ENCODE measurements at regions of chr1 and their contacts with region 1.

Region 1: GRCh38 chr1:203267347-203267846 is 37.9 kb upstream of the BTG2 start:
- DNase-seq: peak; percentile 87
- ATAC-seq: peak; percentile 58
- H3K4me3 Mint-ChIP-seq: peak overlapping the region; percentile 79
- H3K27ac Mint-ChIP-seq: peak overlapping the region; percentile 53
- H3K4me1 Mint-ChIP-seq: peaks cover 22% of the 10 kb centered on the region
- H3K27me3 Mint-ChIP-seq: no peaks in the 10 kb centered on the region

Region 2: GRCh38 chr1:202905331-202905730 is 362.1 kb before region 1 on chr1:
- CTCF ChIA-PET with region 1: no interaction called
- POLR2A ChIA-PET with region 1: no interaction called
- intact Hi-C with region 1: no loop called
- DNase-seq: no peak
- ATAC-seq: no peak
- H3K4me3 Mint-ChIP-seq: no peak overlapping the region
- H3K27ac Mint-ChIP-seq: no peak overlapping the region
- H3K4me1 Mint-ChIP-seq: no peaks in the 10 kb centered on the region
- H3K27me3 Mint-ChIP-seq: no peaks in the 10 kb centered on the region

Region 3: DNA sequence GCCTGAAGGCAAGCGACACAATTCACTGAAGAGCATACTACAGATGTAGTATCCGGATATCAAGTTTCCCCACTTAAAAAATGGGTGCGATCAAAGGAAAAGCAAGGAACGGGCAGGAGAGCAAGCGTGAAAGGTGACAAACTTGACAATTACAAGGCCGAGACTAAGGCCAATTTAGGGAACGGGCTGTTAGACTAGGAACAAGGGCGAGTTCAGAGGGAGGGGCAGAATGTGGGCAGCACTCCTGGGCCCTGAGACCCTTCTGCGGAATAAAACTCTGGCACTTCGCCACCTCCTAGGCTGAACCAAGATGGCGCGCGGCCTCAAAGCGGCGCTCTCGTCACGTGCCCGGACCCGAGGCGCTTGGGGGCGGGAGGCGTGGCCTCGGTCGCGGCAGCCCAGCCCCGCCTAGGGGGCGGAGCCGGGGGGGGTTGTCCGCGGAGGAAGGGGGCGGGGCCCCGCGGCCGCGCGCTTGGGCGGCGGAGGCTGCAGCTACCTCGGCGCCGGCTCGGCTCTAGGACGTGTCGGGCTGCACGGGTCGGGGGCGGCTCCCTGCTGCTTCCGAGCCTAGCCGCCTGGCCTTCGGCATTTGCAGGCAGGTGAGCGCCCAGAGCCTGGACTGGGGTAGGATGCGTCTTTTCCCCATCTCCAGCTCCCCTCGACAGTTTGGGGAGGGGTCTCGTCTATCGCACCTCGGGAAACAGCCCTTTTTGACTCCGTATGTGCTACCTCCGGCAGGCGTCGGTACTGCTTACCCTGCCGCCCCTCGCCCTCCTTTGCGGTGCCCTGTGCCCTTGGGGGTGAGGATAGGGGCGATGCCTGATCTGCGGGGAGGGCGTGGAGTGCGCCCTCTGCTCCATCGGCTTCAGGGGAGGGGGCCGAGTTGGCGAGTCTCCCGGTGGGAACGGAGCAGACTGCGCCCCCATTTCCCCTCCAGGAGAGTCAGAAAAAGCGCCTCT is 241.1 kb before region 1 on chr1 and contains the start of gene PPFIA4:
- CTCF ChIA-PET with region 1: interaction called, 10 read pairs
- POLR2A ChIA-PET with region 1: no interaction called
- intact Hi-C with region 1: no loop called
- DNase-seq: peak; percentile 95
- ATAC-seq: peak; percentile 95
- H3K4me3 Mint-ChIP-seq: peak within 1 kb of the TSS; percentile 82
- H3K27ac Mint-ChIP-seq: peak within 1 kb of the TSS; percentile 84
- H3K4me1 Mint-ChIP-seq: peaks cover 19% of the 10 kb centered on the region
- H3K27me3 Mint-ChIP-seq: peaks cover 4% of the 10 kb centered on the region
- total RNA-seq, gene PPFIA4: 51.2 to 56.4 TPM

Region 4: DNA sequence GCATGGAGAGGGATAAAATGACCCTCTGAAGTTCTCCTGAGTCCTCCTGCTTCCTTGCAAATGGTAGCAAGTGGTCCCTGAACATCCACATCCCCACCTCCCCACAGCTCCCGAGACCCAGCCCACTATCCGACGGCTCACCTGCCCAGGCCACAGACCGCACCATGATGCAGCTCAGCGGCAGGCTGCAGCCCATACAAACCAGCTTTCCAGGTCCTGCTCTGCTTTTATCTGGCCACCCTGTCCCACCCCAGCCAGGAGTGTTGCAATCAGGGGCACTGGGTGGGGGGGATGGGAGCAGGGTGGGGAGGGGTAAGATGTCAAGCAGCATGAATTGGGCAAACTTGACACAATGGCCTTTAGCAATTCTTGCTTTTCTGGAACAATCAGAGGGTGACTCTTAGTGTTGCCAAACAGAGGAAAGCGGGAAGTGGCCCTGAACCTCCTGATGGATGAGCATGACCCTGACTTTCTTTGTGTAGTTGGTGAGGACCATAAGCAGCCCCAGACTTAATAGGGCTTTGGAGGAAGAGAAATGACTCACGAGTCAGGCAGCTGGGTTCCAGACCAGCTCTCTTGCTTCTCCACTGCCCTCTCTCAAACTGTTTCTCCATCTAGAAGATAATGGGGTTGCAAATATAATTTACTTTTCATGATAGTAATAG is 37.8 kb before region 1 on chr1 and contains the start of gene CHIT1:
- CTCF ChIA-PET with region 1: interaction called, 4 read pairs
- POLR2A ChIA-PET with region 1: no interaction called
- intact Hi-C with region 1: loop called in 1 of 2 experiments (anchors 2 kb)
- DNase-seq: no peak
- ATAC-seq: no peak
- H3K4me3 Mint-ChIP-seq: no peak within 1 kb of the TSS
- H3K27ac Mint-ChIP-seq: no peak within 1 kb of the TSS
- H3K4me1 Mint-ChIP-seq: no peaks in the 10 kb centered on the region
- H3K27me3 Mint-ChIP-seq: peaks cover 19% of the 10 kb centered on the region
- total RNA-seq, gene CHIT1: 0.63 to 0.80 TPM

Region 5: GRCh38 chr1:203252678-203253077 is 14.7 kb before region 1 on chr1:
- CTCF ChIA-PET with region 1: interaction called, 16 read pairs
- POLR2A ChIA-PET with region 1: no interaction called
- intact Hi-C with region 1: no loop called
- DNase-seq: no peak
- ATAC-seq: no peak
- H3K4me3 Mint-ChIP-seq: no peak overlapping the region
- H3K27ac Mint-ChIP-seq: no peak overlapping the region
- H3K4me1 Mint-ChIP-seq: no peaks in the 10 kb centered on the region
- H3K27me3 Mint-ChIP-seq: peaks cover 25% of the 10 kb centered on the region

Region 6: GRCh38 chr1:203304919-203305808 is 37.8 kb after region 1 on chr1 and contains the start of gene BTG2:
- CTCF ChIA-PET with region 1: interaction called, 33 read pairs
- POLR2A ChIA-PET with region 1: interaction called, 13 read pairs
- intact Hi-C with region 1: no loop called
- DNase-seq: peak; percentile 96
- ATAC-seq: peak; percentile 88
- H3K4me3 Mint-ChIP-seq: peak within 1 kb of the TSS; percentile 98
- H3K27ac Mint-ChIP-seq: peak within 1 kb of the TSS; percentile 97
- H3K4me1 Mint-ChIP-seq: peaks cover 54% of the 10 kb centered on the region
- H3K27me3 Mint-ChIP-seq: no peaks in the 10 kb centered on the region
- total RNA-seq, gene BTG2: 114 to 142 TPM

Region 7: DNA sequence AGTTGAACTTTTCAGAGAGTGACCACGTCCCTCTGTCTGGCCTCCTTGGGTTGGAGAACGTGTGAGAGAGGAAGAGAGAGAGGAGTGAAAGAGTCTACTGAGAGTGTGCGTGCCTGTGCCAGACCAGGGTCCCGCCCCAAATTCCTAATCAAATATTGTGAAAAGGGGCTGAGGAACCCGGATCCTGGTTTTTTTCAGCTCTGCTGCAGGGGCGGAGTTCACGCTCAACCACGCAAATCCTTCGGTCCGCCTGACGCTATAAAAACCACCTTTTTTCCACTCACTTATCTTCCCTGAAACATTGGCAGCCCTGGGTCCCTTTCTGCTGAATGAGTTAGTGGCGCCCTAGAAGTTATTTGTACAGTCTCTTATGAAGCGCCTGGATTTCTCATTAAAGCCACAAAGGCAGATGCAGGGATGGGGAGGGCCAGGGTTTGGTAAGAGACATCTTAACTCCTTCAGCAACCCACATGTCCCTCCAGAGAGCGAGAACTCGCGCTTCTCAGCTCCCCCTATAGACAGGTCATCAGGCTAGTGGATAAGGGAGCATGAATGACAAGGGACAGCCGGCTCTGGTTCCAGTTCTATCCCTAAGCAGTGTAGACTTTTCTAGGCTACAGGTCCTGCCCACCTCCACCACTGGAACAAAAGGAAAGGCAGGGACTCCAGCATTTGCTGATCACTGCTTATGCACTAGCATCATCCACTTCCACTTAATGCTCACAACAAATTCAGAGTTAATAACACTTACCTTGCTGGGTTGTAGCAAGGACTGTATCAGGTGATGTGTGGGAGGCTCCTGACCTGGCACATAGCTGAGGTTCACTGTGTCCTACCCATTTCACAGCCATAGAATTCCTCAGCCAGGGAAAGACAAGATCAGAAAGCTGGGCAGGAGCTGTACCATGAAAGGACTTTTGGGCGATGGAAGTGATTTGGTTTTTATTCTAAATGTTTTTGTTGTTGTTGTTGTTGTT is 83.9 kb after region 1 on chr1 and contains the start of gene FMOD:
- CTCF ChIA-PET with region 1: interaction called, 710 read pairs
- POLR2A ChIA-PET with region 1: no interaction called
- intact Hi-C with region 1: no loop called
- DNase-seq: no peak
- ATAC-seq: peak; percentile 23
- H3K4me3 Mint-ChIP-seq: no peak within 1 kb of the TSS
- H3K27ac Mint-ChIP-seq: no peak within 1 kb of the TSS
- H3K4me1 Mint-ChIP-seq: peaks cover 3% of the 10 kb centered on the region
- H3K27me3 Mint-ChIP-seq: peaks cover 25% of the 10 kb centered on the region
- total RNA-seq, gene FMOD: 0.87 to 0.98 TPM

Region 8: DNA sequence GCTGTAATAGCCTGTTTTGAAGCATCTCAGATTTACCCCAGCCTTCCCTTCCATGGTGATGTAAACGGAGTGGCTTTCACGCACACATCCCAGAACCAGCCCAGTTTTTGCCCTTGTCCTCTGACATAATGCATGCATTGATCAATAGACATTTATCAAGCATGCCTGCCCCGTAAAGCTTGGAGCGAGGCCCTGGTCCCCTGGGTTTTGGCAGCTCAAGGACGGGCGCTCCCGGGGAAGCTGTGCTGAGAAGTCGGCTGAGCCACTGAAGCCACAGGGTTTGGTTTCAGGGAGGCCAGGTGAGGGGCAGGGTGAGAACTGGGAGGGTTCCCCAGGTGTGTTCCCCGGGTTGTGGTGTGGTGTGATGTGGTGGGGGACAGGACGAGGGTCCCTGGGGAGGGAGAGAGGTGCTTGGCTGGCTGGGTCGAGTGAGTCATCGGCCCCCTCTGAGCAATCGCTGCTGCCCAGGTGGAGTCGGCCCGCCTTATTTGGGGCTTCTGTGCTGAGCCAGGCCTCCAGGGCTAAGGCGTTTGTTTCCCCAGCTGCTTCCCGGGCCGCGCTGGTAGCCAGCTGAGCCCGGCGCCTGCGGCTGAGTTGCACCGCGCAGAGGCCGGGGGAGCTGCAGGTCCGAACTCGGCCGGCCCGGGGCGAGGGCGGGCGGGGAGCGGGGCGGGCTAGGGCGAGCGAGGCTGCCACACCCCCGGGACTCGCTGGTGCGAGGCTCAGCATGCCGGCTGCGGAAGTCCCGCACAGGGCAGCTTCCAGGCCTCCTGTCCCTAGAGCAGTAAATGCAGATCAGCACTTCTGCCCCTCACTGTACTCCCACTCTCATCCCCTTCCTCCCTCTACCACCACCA is 382.8 kb after region 1 on chr1:
- CTCF ChIA-PET with region 1: interaction called, 11 read pairs
- POLR2A ChIA-PET with region 1: no interaction called
- intact Hi-C with region 1: no loop called
- DNase-seq: peak; percentile 81
- ATAC-seq: peak; percentile 43
- H3K4me3 Mint-ChIP-seq: peak overlapping the region; percentile 59
- H3K27ac Mint-ChIP-seq: peak overlapping the region; percentile 89
- H3K4me1 Mint-ChIP-seq: peaks cover 74% of the 10 kb centered on the region
- H3K27me3 Mint-ChIP-seq: no peaks in the 10 kb centered on the region

Measured in activated CD4-positive, alpha-beta T cell treated with anti-CD3 and anti-CD28 coated beads for 36 hours (primary cell).